ENCODE measurements at regions of chr17 and their contacts with region 1.

Region 1: DNA sequence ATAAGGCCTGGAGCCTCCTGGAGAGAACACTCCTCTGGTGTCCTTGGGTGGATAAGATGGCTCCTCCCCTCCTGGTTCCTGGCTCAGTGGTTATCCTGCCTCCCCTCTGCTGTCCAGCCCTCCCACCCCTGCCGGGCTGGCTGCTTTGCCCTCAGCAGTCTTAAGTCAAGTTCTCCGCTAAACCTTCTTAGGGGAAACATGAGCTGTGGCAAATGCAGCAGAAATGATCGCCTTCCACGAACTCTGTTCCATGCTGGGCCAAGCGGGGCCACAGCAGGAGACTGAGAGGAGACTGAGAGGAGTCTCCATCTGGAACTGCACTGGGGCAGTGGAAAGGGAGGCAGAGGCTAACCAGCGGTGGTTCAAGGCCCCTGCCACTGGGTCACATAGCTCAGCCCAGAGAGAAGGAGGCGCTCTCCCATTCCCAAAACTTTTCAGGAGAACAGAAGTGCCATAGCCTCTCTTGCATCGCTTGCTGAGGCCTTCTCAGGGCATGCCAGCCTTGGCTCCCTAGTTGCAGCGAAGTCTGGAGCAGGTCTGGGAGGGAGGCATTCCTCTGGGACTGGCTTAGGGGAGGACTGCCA is 26.9 kb downstream of the TNS4 start:
- DNase-seq: peak; percentile 70
- H3K4me3 Mint-ChIP-seq: no peak overlapping the region
- H3K27ac Mint-ChIP-seq: peak overlapping the region; percentile 73
- H3K4me1 Mint-ChIP-seq: peaks cover 43% of the 10 kb centered on the region
- H3K27me3 Mint-ChIP-seq: no peaks in the 10 kb centered on the region
- CTCF ChIP-seq: no peak

Region 2: DNA sequence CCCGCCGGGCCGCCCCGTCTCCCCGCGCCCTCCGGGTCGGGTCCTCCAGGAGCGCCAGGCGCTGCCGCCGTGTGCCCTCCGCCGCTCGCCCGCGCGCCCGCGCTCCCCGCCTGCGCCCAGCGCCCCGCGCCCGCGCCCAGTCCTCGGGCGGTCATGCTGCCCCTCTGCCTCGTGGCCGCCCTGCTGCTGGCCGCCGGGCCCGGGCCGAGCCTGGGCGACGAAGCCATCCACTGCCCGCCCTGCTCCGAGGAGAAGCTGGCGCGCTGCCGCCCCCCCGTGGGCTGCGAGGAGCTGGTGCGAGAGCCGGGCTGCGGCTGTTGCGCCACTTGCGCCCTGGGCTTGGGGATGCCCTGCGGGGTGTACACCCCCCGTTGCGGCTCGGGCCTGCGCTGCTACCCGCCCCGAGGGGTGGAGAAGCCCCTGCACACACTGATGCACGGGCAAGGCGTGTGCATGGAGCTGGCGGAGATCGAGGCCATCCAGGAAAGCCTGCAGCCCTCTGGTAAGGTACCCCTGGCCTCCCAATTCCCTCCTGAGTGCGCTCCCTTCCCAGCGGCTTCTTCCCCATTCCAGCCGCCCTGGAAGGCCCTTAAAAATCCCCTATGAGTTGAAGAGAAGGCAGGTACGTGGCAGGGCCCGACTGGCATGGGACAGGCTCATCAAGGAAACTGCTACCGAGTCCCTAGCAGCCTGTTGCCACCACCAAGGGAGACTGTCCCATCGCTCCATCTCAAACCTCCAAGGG is 30.8 kb before region 1 on chr17:
- CTCF ChIA-PET with region 1: interaction called, 5 read pairs
- POLR2A ChIA-PET with region 1: interaction called, 40 read pairs
- intact Hi-C with region 1: no loop called
- DNase-seq: peak; percentile 72
- H3K4me3 Mint-ChIP-seq: peak overlapping the region; percentile 65
- H3K27ac Mint-ChIP-seq: no peak overlapping the region
- H3K4me1 Mint-ChIP-seq: peaks cover 21% of the 10 kb centered on the region
- H3K27me3 Mint-ChIP-seq: peaks cover 31% of the 10 kb centered on the region
- CTCF ChIP-seq: peak; percentile 6

Region 3: DNA sequence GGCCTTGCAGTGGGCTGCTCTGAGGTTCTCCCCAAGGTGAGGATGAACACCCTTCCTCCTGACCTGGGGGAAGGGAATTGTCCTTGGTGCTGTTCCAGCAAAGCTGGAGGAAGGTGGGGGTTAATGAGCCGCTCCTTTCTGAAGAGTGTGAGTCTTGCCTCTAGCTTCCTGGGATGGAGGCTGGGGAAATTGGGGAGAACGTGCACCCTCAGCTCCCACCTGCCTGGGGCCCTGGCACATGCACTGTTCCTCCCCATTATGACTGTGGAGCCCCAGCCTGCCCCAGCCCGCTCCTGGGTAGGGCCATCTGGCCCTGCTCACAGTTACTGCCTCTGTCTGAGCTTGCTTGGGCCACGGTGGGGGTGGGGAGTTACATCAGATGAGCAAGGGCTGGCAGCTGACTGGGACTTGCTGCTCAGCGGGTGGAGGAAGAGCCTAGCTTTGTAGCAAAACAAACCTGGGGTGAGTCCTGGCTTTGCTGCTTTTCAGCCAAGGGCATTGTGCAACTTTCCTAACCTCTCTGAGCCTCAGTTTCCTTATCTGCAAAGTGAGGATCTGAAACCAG is 15.9 kb after region 1 on chr17:
- CTCF ChIA-PET with region 1: interaction called, 4 read pairs
- POLR2A ChIA-PET with region 1: interaction called, 703 read pairs
- intact Hi-C with region 1: no loop called
- DNase-seq: peak; percentile 93
- H3K4me3 Mint-ChIP-seq: peak overlapping the region; percentile 98
- H3K27ac Mint-ChIP-seq: peak overlapping the region; percentile 83
- H3K4me1 Mint-ChIP-seq: peaks cover 70% of the 10 kb centered on the region
- H3K27me3 Mint-ChIP-seq: no peaks in the 10 kb centered on the region
- CTCF ChIP-seq: no peak

Region 4: DNA sequence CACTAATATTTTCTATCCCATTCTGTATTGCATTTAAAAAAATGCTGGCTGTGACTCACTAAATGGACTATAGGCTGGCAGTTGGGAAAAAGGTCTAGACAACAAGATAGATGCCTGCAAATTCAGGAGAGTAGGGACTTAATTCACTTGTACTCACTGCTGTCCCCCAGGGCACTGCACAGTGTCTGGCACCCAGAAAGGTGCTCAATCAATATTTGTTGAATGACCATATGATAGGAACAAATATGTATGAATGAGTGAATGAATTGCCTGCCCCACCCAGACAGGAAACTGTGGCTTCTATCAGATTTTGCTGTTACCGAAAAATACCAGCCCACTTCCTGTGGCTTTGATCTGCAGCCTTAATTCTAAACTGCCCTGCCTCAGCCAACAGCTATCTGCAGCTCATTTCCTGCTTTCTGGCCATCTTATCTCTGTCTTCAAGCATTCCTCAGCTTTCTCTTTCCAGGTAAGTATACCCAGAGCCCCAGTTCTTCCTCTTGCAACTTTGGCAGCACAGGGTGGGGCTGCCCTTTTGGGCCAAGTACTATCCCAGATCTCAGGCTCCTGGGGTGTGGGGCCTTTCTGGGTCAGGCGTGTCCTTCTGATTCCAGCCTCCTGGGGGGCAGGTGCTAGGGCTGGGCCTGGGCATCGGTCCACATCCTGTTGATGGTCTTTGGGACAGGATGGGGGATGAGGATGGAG is 42.2 kb after region 1 on chr17:
- CTCF ChIA-PET with region 1: no interaction called
- POLR2A ChIA-PET with region 1: interaction called, 199 read pairs
- intact Hi-C with region 1: no loop called
- DNase-seq: no peak
- H3K4me3 Mint-ChIP-seq: peak overlapping the region; percentile 58
- H3K27ac Mint-ChIP-seq: peak overlapping the region; percentile 87
- H3K4me1 Mint-ChIP-seq: peaks cover 63% of the 10 kb centered on the region
- H3K27me3 Mint-ChIP-seq: no peaks in the 10 kb centered on the region
- CTCF ChIP-seq: no peak

Region 5: GRCh38 chr17:40551879-40552768 is 77.6 kb after region 1 on chr17:
- CTCF ChIA-PET with region 1: interaction called, 5 read pairs
- POLR2A ChIA-PET with region 1: interaction called, 39 read pairs
- intact Hi-C with region 1: no loop called
- DNase-seq: peak; percentile 65
- H3K4me3 Mint-ChIP-seq: no peak overlapping the region
- H3K27ac Mint-ChIP-seq: no peak overlapping the region
- H3K4me1 Mint-ChIP-seq: peaks cover 32% of the 10 kb centered on the region
- H3K27me3 Mint-ChIP-seq: no peaks in the 10 kb centered on the region
- CTCF ChIP-seq: no peak

Region 6: DNA sequence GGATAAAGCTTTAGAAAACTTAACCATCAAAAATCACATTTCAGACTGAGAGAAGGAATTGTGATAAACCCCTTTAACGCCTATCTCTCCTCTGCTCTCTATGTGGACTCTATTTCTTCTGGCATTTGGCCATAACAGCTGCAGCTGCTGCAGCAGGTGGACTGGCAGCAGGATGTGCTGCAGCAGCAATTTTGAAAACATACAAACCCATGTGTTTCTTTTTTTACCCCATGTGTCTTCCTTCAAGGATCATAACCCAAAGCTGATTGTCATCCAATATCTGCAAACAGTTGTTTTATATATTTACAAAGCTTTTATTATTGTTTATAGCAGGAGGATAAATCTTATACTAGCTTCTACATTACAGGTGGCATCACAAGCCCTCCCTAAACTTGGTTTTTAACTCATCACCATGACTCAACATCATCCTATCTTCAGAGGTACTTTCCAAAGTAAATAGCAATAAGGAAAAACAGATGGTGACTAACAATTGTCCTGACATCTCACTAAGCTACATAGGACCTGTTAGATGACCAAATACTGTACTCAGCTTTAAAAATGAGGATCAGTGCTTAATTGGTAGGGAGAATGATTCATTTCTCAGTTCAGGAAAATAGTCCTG is 737.4 kb after region 1 on chr17:
- CTCF ChIA-PET with region 1: no interaction called
- POLR2A ChIA-PET with region 1: no interaction called
- intact Hi-C with region 1: no loop called
- DNase-seq: peak; percentile 3
- H3K4me3 Mint-ChIP-seq: no peak overlapping the region
- H3K27ac Mint-ChIP-seq: no peak overlapping the region
- H3K4me1 Mint-ChIP-seq: no peaks in the 10 kb centered on the region
- H3K27me3 Mint-ChIP-seq: peaks cover 56% of the 10 kb centered on the region
- CTCF ChIP-seq: no peak

Measured in MCF 10A (cell line).